ENCODE measurements at regions of chr11 and their contacts with region 1.

Region 1: DNA sequence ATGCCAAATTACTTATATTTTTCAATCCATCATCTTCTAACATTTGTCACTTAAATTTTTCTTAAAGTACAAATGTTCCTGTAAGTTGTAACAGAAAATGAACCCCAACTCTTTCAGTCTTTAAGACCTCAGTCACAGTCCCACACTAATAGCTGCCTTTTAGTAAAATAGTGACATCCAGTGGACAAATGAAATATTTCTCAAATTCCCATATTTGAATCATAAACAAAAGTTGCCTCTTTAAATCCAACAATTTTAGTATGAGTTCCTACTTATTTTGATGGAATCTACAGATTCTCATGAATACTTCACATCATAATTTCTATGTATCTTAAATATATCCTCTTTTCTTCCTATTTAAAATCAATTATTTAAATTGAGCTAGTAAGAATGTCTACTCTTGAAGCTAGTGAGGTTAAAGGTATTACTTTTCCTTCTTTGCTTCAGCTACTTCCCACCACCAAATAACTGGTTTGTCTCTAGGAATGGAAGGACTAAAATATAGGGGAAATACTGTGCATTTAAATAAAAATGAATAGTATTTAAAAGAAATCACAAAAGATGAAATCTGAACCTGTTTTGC is 9.2 kb downstream of the LIN7C start:
- DNase-seq: no peak
- ATAC-seq: no peak
- H3K4me3 ChIP-seq: no peak overlapping the region
- H3K27ac ChIP-seq: no peak overlapping the region
- H3K4me1 ChIP-seq: no peaks in the 10 kb centered on the region
- H3K27me3 ChIP-seq: no peaks in the 10 kb centered on the region
- CTCF ChIP-seq: peak; percentile 16 to 60 (median 30); a peak in 4 of 6 replicates
- POLR2A ChIP-seq: no peak
- RAD21 ChIP-seq: 0 out of 2 replicates have a peak, but pooled peaks have one; percentile 24

Region 2: DNA sequence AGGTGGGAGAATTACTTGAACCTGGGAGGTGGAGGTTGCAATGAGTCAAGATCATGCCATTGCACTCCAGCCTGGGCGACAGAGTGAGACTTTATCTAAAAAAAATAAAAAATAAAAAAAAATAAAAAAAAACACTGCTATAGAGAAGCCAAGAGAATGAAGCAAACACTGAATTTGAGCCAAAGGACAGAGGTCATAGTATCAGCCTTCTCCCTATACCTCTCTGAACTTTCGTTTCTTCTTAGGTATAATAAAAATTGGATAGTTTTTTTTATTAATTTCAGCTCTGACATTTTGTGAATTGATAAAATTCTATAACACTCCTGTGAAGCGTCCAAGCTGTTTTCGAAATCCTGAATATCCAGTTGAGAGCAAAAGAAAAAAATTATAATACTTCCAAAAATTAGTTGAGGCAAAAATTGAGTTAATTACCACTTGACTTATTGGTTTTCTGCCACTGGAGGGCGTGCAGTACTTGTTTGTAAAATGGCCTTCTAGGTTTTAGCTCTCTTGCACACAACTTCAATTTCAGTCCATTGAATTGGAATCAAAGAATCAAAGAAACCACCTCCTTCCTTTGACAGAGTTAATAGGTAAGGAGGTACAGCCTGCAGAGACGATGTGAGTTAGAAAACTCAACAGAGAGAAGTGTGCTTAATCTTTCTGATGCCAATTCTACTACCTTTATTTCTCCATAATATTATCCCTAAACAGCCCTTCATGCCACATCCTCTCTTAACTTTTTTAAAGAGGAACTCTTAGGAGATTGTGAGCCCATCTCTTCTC is 313.5 kb before region 1 on chr11:
- CTCF ChIA-PET with region 1: interaction called, 15 read pairs
- POLR2A ChIA-PET with region 1: no interaction called
- RAD21 ChIA-PET with region 1: no interaction called
- intact Hi-C with region 1: no loop called
- DNase-seq: peak; percentile 51
- ATAC-seq: 0 out of 2 replicates have a peak, but pooled peaks have one; percentile 49
- H3K4me3 ChIP-seq: no peak overlapping the region
- H3K27ac ChIP-seq: no peak overlapping the region
- H3K4me1 ChIP-seq: no peaks in the 10 kb centered on the region
- H3K27me3 ChIP-seq: peaks cover 16% of the 10 kb centered on the region
- CTCF ChIP-seq: peak; percentile 52 to 66 (median 64); a peak in 5 of 6 replicates
- POLR2A ChIP-seq: no peak
- RAD21 ChIP-seq: peak; percentile 78

Region 3: GRCh38 chr11:27524155-27524554 is 26.8 kb after region 1 on chr11:
- CTCF ChIA-PET with region 1: no interaction called
- POLR2A ChIA-PET with region 1: no interaction called
- RAD21 ChIA-PET with region 1: no interaction called
- intact Hi-C with region 1: no loop called
- DNase-seq: peak; percentile 35
- ATAC-seq: peak; percentile 90
- H3K4me3 ChIP-seq: no peak overlapping the region
- H3K27ac ChIP-seq: no peak overlapping the region
- H3K4me1 ChIP-seq: peaks cover 5 to 8% of the 10 kb centered on the region in 2 experiments
- H3K27me3 ChIP-seq: no peaks in the 10 kb centered on the region
- CTCF ChIP-seq: peak in 2 of 3 experiments; percentile 36 to 47; a peak in 3 of 6 replicates
- POLR2A ChIP-seq: no peak
- RAD21 ChIP-seq: peak; percentile 11; the same call in 1 of the 2 replicates

Measured in HCT116 (cell line).